Panc1 (cell line): ENCODE measurements at regions of chr10 and their contacts with region 1.

Region 1: GRCh38 chr10:21989453-21990154 is 13.9 kb downstream of the DNAJC1 start:
- DNase-seq: no peak
- ATAC-seq: peak; percentile 98
- H3K4me3 ChIP-seq: no peak overlapping the region
- H3K27ac ChIP-seq: no peak overlapping the region
- H3K4me1 ChIP-seq: no peaks in the 10 kb centered on the region
- H3K27me3 ChIP-seq: no peaks in the 10 kb centered on the region
- CTCF ChIP-seq: peak; percentile 73

Region 2: DNA sequence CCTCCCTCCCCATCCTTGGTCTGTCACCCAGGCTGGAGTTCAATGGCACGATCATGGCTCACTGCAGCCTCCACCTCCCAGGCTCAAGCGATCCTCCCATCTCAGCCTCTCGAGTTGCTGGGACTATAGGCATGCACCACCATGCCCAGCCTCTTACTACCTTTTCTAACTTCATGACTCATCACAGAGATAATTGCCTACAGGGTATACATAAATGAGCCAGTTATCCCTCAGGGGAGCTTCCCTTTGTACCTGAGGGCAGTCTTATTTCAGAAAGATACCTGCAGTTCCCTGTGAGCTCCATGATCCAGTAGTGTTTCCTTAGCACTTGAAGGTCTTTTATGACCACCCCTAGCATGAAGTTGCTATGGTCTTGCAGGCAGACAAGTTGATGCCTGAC is 108.1 kb after region 1 on chr10:
- CTCF ChIA-PET with region 1: no interaction called
- POLR2A ChIA-PET with region 1: no interaction called
- in situ Hi-C with region 1: no loop called
- intact Hi-C with region 1: no loop called
- DNase-seq: no peak
- ATAC-seq: no peak
- H3K4me3 ChIP-seq: no peak overlapping the region
- H3K27ac ChIP-seq: no peak overlapping the region
- H3K4me1 ChIP-seq: no peaks in the 10 kb centered on the region
- H3K27me3 ChIP-seq: no peaks in the 10 kb centered on the region
- CTCF ChIP-seq: no peak

Region 3: GRCh38 chr10:22148961-22149360 is 159.4 kb after region 1 on chr10:
- CTCF ChIA-PET with region 1: no interaction called
- POLR2A ChIA-PET with region 1: no interaction called
- in situ Hi-C with region 1: no loop called
- intact Hi-C with region 1: no loop called
- DNase-seq: no peak
- ATAC-seq: no peak
- H3K4me3 ChIP-seq: no peak overlapping the region
- H3K27ac ChIP-seq: no peak overlapping the region
- H3K4me1 ChIP-seq: no peaks in the 10 kb centered on the region
- H3K27me3 ChIP-seq: no peaks in the 10 kb centered on the region
- CTCF ChIP-seq: no peak

Region 4: GRCh38 chr10:22316285-22317120 is 326.9 kb after region 1 on chr10 and contains the start of gene COMMD3:
- CTCF ChIA-PET with region 1: no interaction called
- POLR2A ChIA-PET with region 1: no interaction called
- in situ Hi-C with region 1: no loop called
- intact Hi-C with region 1: loop called (anchors 5 kb)
- DNase-seq: no peak
- ATAC-seq: peak; percentile 80
- H3K4me3 ChIP-seq: peak within 1 kb of the TSS; percentile 58 to 72
- H3K27ac ChIP-seq: peak within 1 kb of the TSS; percentile 86
- H3K4me1 ChIP-seq: peaks cover 11% of the 10 kb centered on the region
- H3K27me3 ChIP-seq: no peaks in the 10 kb centered on the region
- CTCF ChIP-seq: no peak
- total RNA-seq, gene COMMD3: 35.6 TPM

Region 5: DNA sequence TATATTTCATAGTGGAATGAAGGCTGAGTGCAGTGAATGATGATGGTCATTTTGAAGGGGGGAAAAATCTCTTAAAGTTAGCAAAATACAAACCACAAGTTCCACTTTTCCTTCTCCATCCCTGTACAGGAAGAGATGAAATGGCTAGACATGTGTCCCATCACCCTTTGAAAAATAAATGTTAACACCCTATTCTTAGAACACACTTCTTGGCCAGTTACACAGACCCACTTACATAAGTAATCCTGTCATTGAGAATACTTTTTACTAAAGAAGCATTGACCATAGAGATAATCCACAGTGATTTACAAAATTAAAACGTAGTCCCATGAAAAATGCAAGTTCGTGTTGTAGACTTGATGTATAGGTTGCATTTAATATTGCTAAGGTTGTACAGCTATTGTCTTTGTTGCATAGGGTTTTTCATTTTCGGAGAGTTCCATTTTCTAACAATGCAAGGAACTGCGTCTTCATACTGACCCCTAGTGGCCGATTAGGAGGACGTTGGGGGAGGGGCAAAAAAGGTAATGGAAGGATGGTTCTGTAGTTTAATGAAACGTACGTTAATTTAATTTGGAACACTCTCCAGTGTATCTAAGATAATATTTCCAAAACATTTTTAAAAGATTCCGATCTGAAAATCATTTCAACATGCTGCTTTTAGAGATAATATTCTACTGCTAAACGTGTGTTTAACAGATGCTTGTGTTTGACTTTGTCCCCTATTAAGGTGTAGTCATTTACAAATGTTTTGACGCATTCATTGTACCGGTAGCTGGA is 999.2 kb after region 1 on chr10:
- CTCF ChIA-PET with region 1: no interaction called
- POLR2A ChIA-PET with region 1: no interaction called
- in situ Hi-C with region 1: no loop called
- intact Hi-C with region 1: loop called (anchors 5 kb)
- DNase-seq: peak; percentile 35
- ATAC-seq: peak; percentile 75; the same call in 1 of the 2 replicates
- H3K4me3 ChIP-seq: no peak overlapping the region
- H3K27ac ChIP-seq: no peak overlapping the region
- H3K4me1 ChIP-seq: no peaks in the 10 kb centered on the region; the same call in 1 of the 2 replicates
- H3K27me3 ChIP-seq: no peaks in the 10 kb centered on the region; the same call in 1 of the 2 replicates
- CTCF ChIP-seq: peak; percentile 69; the same call in 1 of the 2 replicates

Region 6: GRCh38 chr10:23067939-23068775 is 1078.6 kb after region 1 on chr10:
- CTCF ChIA-PET with region 1: no interaction called
- POLR2A ChIA-PET with region 1: no interaction called
- in situ Hi-C with region 1: no loop called
- intact Hi-C with region 1: loop called (anchors 10 kb)
- DNase-seq: peak; percentile 46
- ATAC-seq: peak; percentile 98
- H3K4me3 ChIP-seq: no peak overlapping the region
- H3K27ac ChIP-seq: no peak overlapping the region
- H3K4me1 ChIP-seq: 0 out of 2 replicates have a peak, but pooled peaks cover 4% of the 10 kb centered on the region
- H3K27me3 ChIP-seq: no peaks in the 10 kb centered on the region
- CTCF ChIP-seq: peak; percentile 87

Region 7: GRCh38 chr10:23158370-23158769 is 1168.8 kb after region 1 on chr10:
- CTCF ChIA-PET with region 1: interaction called, 17 read pairs
- POLR2A ChIA-PET with region 1: no interaction called
- in situ Hi-C with region 1: no loop called
- intact Hi-C with region 1: no loop called
- DNase-seq: peak; percentile 39
- ATAC-seq: peak; percentile 88
- H3K4me3 ChIP-seq: no peak overlapping the region
- H3K27ac ChIP-seq: no peak overlapping the region
- H3K4me1 ChIP-seq: 0 out of 2 replicates have a peak, but pooled peaks cover 3% of the 10 kb centered on the region
- H3K27me3 ChIP-seq: no peaks in the 10 kb centered on the region
- CTCF ChIP-seq: peak; percentile 82